ENCODE measurements at regions of chr12 and their contacts with region 1.

Region 1: GRCh38 chr12:130818635-130819576 is 20.1 kb downstream of the STX2 start:
- DNase-seq: peak; percentile 83
- ATAC-seq: peak; percentile 90
- H3K4me3 ChIP-seq: peak overlapping the region; percentile 50 to 78 (median 74)
- H3K4me3 Mint-ChIP-seq: peak overlapping the region; percentile 94
- H3K27ac ChIP-seq: peak overlapping the region in 1 of 2 donors; percentile 56
- H3K27ac Mint-ChIP-seq: peak overlapping the region; percentile 64
- H3K4me1 ChIP-seq: peaks cover 3 to 11% of the 10 kb centered on the region in 2 donors
- H3K4me1 Mint-ChIP-seq: peaks cover 19% of the 10 kb centered on the region
- H3K27me3 ChIP-seq: no peaks in the 10 kb centered on the region
- H3K27me3 Mint-ChIP-seq: no peaks in the 10 kb centered on the region
- CTCF ChIP-seq: peak; percentile 99

Region 2: GRCh38 chr12:130761537-130762318 is 57.2 kb before region 1 on chr12:
- CTCF ChIA-PET with region 1: interaction called, 4 read pairs
- POLR2A ChIA-PET with region 1: interaction called, 4 read pairs
- intact Hi-C with region 1: loop called (anchors 2 kb)
- DNase-seq: peak; percentile 36
- ATAC-seq: peak; percentile 7
- H3K4me3 ChIP-seq: peak overlapping the region in 1 of 5 experiments; percentile 19
- H3K4me3 Mint-ChIP-seq: peak overlapping the region; percentile 20
- H3K27ac ChIP-seq: no peak overlapping the region
- H3K27ac Mint-ChIP-seq: no peak overlapping the region
- H3K4me1 ChIP-seq: peaks cover 6% of the 10 kb centered on the region in 2 donors
- H3K4me1 Mint-ChIP-seq: peaks cover 18% of the 10 kb centered on the region
- H3K27me3 ChIP-seq: peaks cover 0 to 17% (median 6%) of the 10 kb centered on the region in 4 experiments
- H3K27me3 Mint-ChIP-seq: peaks cover 7% of the 10 kb centered on the region
- CTCF ChIP-seq: no peak

Region 3: GRCh38 chr12:130838951-130839769 is 20.3 kb after region 1 on chr12 and contains the start of gene STX2:
- CTCF ChIA-PET with region 1: interaction called, 5 read pairs
- POLR2A ChIA-PET with region 1: interaction called, 3 read pairs
- intact Hi-C with region 1: loop called (anchors 1 kb)
- DNase-seq: peak; percentile 91
- ATAC-seq: peak; percentile 95
- H3K4me3 ChIP-seq: peak within 1 kb of the TSS; percentile 42 to 81 (median 56)
- H3K4me3 Mint-ChIP-seq: peak within 1 kb of the TSS; percentile 86
- H3K27ac ChIP-seq: no peak within 1 kb of the TSS
- H3K27ac Mint-ChIP-seq: peak within 1 kb of the TSS; percentile 64
- H3K4me1 ChIP-seq: peaks cover 10 to 17% of the 10 kb centered on the region in 2 donors
- H3K4me1 Mint-ChIP-seq: peaks cover 23% of the 10 kb centered on the region
- H3K27me3 ChIP-seq: no peaks in the 10 kb centered on the region
- H3K27me3 Mint-ChIP-seq: no peaks in the 10 kb centered on the region
- CTCF ChIP-seq: no peak
- total RNA-seq, gene STX2: 18.2 and 19.8 TPM in 2 replicates

Region 4: GRCh38 chr12:130871286-130872178 is 52.6 kb after region 1 on chr12 and contains the start of gene RAN:
- CTCF ChIA-PET with region 1: interaction called, 3 read pairs
- POLR2A ChIA-PET with region 1: no interaction called
- intact Hi-C with region 1: loop called (anchors 10 kb)
- DNase-seq: peak; percentile 97
- ATAC-seq: peak; percentile 77
- H3K4me3 ChIP-seq: peak within 1 kb of the TSS; percentile 70 to 81 (median 73)
- H3K4me3 Mint-ChIP-seq: peak within 1 kb of the TSS; percentile 96
- H3K27ac ChIP-seq: peak within 1 kb of the TSS; percentile 78 to 84
- H3K27ac Mint-ChIP-seq: peak within 1 kb of the TSS; percentile 92
- H3K4me1 ChIP-seq: peaks cover 23 to 26% of the 10 kb centered on the region in 2 donors
- H3K4me1 Mint-ChIP-seq: peaks cover 35% of the 10 kb centered on the region
- H3K27me3 ChIP-seq: no peaks in the 10 kb centered on the region
- H3K27me3 Mint-ChIP-seq: no peaks in the 10 kb centered on the region
- CTCF ChIP-seq: no peak
- total RNA-seq, gene RAN: 289 and 298 TPM in 2 replicates